ENCODE measurements at regions of chr14 and their contacts with region 1.

Region 1: DNA sequence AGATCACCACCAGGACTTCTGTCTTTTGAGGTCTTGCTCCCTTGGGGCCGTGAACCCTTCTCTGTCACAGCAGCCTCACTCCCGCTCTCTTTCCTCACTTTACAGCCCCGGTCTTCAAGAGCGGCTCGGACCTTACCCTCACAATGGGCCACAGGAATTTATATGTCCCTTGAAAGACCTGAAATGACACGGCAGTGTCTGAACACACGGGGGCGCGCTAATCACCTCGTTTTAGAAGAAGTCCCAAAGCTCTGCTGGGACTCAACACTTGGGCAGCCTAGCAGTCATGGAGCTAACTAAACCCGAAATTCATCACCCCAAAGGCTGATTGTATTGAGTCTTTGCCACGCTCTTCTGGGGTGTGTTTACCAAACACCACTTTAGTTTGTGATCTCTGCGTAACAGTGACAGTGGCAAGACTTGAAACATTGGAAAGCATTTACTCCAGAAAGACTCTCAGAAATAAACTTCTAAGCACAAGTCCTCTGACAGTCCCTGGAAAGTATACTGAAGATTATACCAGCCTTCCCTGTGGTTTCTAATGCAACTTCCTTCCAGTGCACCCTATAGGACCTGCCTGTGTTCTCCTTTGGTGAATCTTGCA is 29.0 kb downstream of the SERPINA11 start:
- DNase-seq: peak; percentile 37
- H3K4me3 ChIP-seq: no peak overlapping the region
- H3K27ac ChIP-seq: no peak overlapping the region
- H3K4me1 ChIP-seq: peaks cover 15% of the 10 kb centered on the region
- H3K27me3 ChIP-seq: no peaks in the 10 kb centered on the region
- CTCF ChIP-seq: peak; percentile 71 to 78

Region 2: GRCh38 chr14:94295360-94296180 is 128.0 kb before region 1 on chr14:
- CTCF ChIA-PET with region 1: no interaction called
- dilution Hi-C with region 1: no loop called
- in situ Hi-C with region 1: no loop called
- intact Hi-C with region 1: no loop called
- DNase-seq: no peak
- H3K4me3 ChIP-seq: no peak overlapping the region
- H3K27ac ChIP-seq: no peak overlapping the region
- H3K4me1 ChIP-seq: no peaks in the 10 kb centered on the region
- H3K27me3 ChIP-seq: no peaks in the 10 kb centered on the region
- CTCF ChIP-seq: no peak

Region 3: DNA sequence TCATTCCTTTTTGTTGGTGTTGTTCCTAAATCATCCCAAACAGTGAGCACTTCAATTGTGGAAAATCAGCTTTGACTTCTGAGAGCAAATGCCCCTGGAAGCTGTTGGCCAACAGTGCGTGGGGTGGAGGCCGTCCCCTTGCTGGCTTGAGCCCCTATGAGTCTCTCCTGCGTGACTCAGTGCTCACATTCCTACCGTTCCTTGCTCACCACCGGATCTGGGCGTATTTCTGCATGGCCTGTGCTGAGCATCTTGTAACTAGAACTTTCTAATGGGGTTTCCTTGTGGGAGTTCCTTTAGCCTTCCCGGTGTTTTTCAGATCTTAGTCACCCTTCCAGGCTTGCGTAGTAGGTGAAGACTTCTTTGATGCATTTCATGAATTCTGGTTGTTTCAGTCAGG is 49.8 kb before region 1 on chr14:
- CTCF ChIA-PET with region 1: no interaction called
- dilution Hi-C with region 1: no loop called
- in situ Hi-C with region 1: no loop called
- intact Hi-C with region 1: no loop called
- DNase-seq: peak; percentile 98
- H3K4me3 ChIP-seq: no peak overlapping the region
- H3K27ac ChIP-seq: peak overlapping the region; percentile 74
- H3K4me1 ChIP-seq: peaks cover 25% of the 10 kb centered on the region
- H3K27me3 ChIP-seq: no peaks in the 10 kb centered on the region
- CTCF ChIP-seq: no peak

Region 4: GRCh38 chr14:94401083-94401482 is 22.5 kb before region 1 on chr14:
- CTCF ChIA-PET with region 1: no interaction called
- dilution Hi-C with region 1: no loop called
- in situ Hi-C with region 1: no loop called
- intact Hi-C with region 1: loop called (anchors 2 kb)
- DNase-seq: peak; percentile 84
- H3K4me3 ChIP-seq: no peak overlapping the region
- H3K27ac ChIP-seq: peak overlapping the region; percentile 41
- H3K4me1 ChIP-seq: peaks cover 19% of the 10 kb centered on the region
- H3K27me3 ChIP-seq: no peaks in the 10 kb centered on the region
- CTCF ChIP-seq: no peak

Region 5: DNA sequence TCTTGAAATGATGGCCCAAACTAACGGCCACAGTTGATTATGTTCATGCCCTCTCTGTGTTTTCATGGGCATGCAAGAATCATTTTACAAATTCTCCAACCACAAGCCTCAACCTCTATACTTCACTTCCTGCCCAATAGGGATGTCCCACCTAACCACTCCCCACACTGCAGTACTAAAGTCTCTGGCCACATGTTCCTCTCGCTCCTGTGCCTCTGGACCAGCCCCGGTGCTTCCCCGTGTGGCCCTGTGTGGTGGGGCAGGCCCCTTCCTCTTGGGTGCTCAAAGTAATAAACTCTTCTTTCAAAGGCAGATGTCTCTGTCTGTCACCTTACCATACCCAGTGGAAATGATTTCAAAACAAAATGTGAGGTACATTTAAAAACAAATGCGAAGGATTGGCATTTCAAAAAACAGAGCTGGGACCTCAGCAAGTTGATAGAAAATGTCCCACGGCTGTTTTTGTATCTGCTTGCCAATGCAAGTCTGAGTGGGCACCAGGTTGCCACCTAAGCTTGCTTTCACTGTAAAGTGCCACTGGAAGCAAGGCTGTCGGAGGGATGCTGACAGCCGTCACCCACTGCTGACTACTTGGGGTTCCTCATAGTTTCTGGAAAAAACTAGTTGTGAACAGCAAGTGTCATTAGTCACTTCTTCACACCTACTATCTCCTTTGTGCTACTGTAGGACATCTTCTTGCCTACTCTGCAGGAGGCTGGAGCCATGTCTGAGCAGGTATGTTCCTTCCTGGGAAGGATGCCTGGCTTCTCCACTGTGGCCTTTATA is 37.3 kb after region 1 on chr14:
- CTCF ChIA-PET with region 1: no interaction called
- dilution Hi-C with region 1: loop called (anchors 5 kb)
- in situ Hi-C with region 1: no loop called
- intact Hi-C with region 1: no loop called
- DNase-seq: no peak
- H3K4me3 ChIP-seq: no peak overlapping the region
- H3K27ac ChIP-seq: no peak overlapping the region
- H3K4me1 ChIP-seq: peaks cover 5% of the 10 kb centered on the region
- H3K27me3 ChIP-seq: no peaks in the 10 kb centered on the region
- CTCF ChIP-seq: no peak

Region 6: GRCh38 chr14:94517641-94518257 is 94.2 kb after region 1 on chr14:
- CTCF ChIA-PET with region 1: no interaction called
- dilution Hi-C with region 1: loop called (anchors 5 kb)
- in situ Hi-C with region 1: no loop called
- intact Hi-C with region 1: no loop called
- DNase-seq: no peak
- H3K4me3 ChIP-seq: no peak overlapping the region
- H3K27ac ChIP-seq: no peak overlapping the region
- H3K4me1 ChIP-seq: no peaks in the 10 kb centered on the region
- H3K27me3 ChIP-seq: peaks cover 2% of the 10 kb centered on the region
- CTCF ChIP-seq: no peak

Measured in mammary epithelial cell (primary cell).